Tibial artery (tissue), 4 donors: ENCODE measurements at regions of chr6 and their contacts with region 1.

Region 1: GRCh38 chr6:167904791-167905190 is 78.1 kb downstream of the AFDN start:
- DNase-seq: no peak
- H3K4me3 ChIP-seq: no peak overlapping the region
- H3K27ac ChIP-seq: no peak overlapping the region
- H3K4me1 ChIP-seq: no peaks in the 10 kb centered on the region
- H3K27me3 ChIP-seq: no peaks in the 10 kb centered on the region
- CTCF ChIP-seq: no peak

Region 2: DNA sequence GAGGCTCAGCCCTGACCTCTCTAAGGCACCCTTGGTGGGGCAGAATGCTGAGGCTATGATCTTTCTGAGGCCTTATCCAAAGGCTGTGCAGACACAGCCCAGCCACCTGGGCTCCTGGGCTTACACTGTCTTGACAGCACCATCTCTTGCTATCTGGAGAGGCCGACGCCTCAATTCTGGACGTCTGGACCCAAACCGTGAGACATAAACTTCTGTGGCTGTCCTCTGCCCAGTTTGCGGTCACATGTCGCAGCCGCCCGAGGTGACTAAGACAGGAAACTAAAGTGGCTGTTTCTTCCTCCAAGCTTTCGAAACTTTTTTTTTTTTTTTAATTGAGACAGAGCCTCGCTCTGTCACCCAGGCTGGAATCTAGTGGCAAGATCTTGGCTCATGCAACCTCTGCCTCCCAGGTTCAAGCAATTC is 1645.9 kb before region 1 on chr6:
- intact Hi-C with region 1: no loop called
- DNase-seq: peak in 1 of 2 donors; percentile 74
- H3K4me3 ChIP-seq: no peak overlapping the region
- H3K27ac ChIP-seq: peak overlapping the region in 1 of 2 donors; percentile 7
- H3K4me1 ChIP-seq: peaks cover 0 to 4% (median 1%) of the 10 kb centered on the region in 4 donors
- H3K27me3 ChIP-seq: peaks cover 0 to 35% of the 10 kb centered on the region in 2 donors
- CTCF ChIP-seq: no peak

Region 3: GRCh38 chr6:167485186-167485978 is 419.4 kb before region 1 on chr6:
- intact Hi-C with region 1: loop called (anchors 5 kb)
- DNase-seq: no peak
- H3K4me3 ChIP-seq: no peak overlapping the region
- H3K27ac ChIP-seq: no peak overlapping the region
- H3K4me1 ChIP-seq: no peaks in the 10 kb centered on the region
- H3K27me3 ChIP-seq: peaks cover 0 to 3% of the 10 kb centered on the region in 2 donors
- CTCF ChIP-seq: peak; percentile 69 to 75